CD4-positive, alpha-beta T cell (primary cell): ENCODE measurements at regions of chr19 and their contacts with region 1.

Region 1: GRCh38 chr19:16185123-16185767 is at the start of gene FAM32A:
- DNase-seq: peak; percentile 97 to 100 (median 98)
- ATAC-seq: peak; percentile 93
- H3K4me3 ChIP-seq: peak within 1 kb of the TSS; percentile 92
- H3K4me3 Mint-ChIP-seq: peak within 1 kb of the TSS; percentile 93
- H3K27ac ChIP-seq: peak within 1 kb of the TSS; percentile 83 to 85
- H3K27ac Mint-ChIP-seq: peak within 1 kb of the TSS; percentile 87
- H3K4me1 ChIP-seq: peaks cover 44% of the 10 kb centered on the region
- H3K4me1 Mint-ChIP-seq: peaks cover 29% of the 10 kb centered on the region
- H3K27me3 ChIP-seq: no peaks in the 10 kb centered on the region
- H3K27me3 Mint-ChIP-seq: no peaks in the 10 kb centered on the region
- CTCF ChIP-seq: no peak
- total RNA-seq, gene FAM32A: 44.5 to 50.3 TPM

Region 2: DNA sequence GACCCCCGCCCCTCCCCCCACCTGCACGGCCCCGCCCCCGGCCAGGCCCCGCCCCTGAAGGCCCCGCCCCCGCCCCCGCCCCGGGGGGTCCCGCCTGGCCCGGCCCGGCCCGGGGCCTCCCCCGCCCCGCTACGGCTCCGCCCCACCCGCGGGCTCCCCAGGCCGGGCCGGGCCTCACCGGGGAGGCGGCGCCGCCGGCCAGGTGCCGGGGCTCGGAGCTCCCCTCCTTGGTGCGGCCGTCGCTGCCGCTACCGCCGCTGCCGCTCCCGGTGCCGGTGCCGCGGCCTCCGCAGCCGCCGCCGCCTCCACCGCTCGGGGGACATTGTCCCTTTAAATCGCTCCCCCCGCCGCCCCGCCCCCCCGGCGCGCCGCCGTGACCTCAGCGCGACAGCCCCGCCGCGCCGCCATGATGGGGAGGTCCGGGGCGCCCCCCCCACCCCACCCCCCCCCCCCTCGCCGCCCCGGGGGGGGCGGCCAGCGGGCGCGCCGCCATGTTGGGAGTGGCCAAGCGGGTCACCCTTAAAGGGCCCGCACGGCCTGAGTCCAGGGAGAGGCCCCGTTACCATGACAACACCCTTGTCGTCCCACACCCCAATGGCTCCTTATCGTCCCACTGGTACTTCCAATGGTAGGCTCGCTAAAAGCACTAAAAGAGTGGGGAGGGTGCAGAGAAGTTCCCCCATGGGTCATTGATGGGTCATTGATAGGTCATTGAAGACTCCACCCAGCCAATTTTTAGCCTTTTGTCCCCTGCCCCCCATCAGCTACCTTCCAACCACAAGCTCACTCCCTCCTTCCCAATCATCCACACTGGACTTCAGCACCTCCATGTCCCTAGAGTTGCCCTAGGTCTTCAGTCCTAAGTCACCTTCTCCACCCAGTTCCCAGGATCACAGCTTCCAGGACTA is 735.4 kb before region 1 on chr19 and contains the start of gene WIZ:
- CTCF ChIA-PET with region 1: no interaction called
- POLR2A ChIA-PET with region 1: no interaction called
- intact Hi-C with region 1: loop called in 1 of 2 experiments (anchors 10 kb)
- DNase-seq: peak; percentile 75 to 92 (median 84)
- ATAC-seq: peak; percentile 83
- H3K4me3 ChIP-seq: peak within 1 kb of the TSS; percentile 47
- H3K4me3 Mint-ChIP-seq: peak within 1 kb of the TSS; percentile 92
- H3K27ac ChIP-seq: peak within 1 kb of the TSS in 1 of 2 donors; percentile 79
- H3K27ac Mint-ChIP-seq: peak within 1 kb of the TSS; percentile 81
- H3K4me1 ChIP-seq: peaks cover 30% of the 10 kb centered on the region
- H3K4me1 Mint-ChIP-seq: peaks cover 30% of the 10 kb centered on the region
- H3K27me3 ChIP-seq: no peaks in the 10 kb centered on the region
- H3K27me3 Mint-ChIP-seq: no peaks in the 10 kb centered on the region
- CTCF ChIP-seq: no peak
- total RNA-seq, gene WIZ: 12.9 to 14.3 TPM

Region 3: GRCh38 chr19:15532779-15533521 is 652.3 kb before region 1 on chr19:
- CTCF ChIA-PET with region 1: no interaction called
- POLR2A ChIA-PET with region 1: no interaction called
- intact Hi-C with region 1: no loop called
- DNase-seq: peak in 4 of 14 experiments; percentile 16 to 43 (median 32)
- ATAC-seq: peak; percentile 61
- H3K4me3 ChIP-seq: no peak overlapping the region
- H3K4me3 Mint-ChIP-seq: no peak overlapping the region
- H3K27ac ChIP-seq: no peak overlapping the region
- H3K27ac Mint-ChIP-seq: peak overlapping the region; percentile 43
- H3K4me1 ChIP-seq: peaks cover 11% of the 10 kb centered on the region
- H3K4me1 Mint-ChIP-seq: peaks cover 16% of the 10 kb centered on the region
- H3K27me3 ChIP-seq: no peaks in the 10 kb centered on the region
- H3K27me3 Mint-ChIP-seq: no peaks in the 10 kb centered on the region
- CTCF ChIP-seq: no peak

Region 4: DNA sequence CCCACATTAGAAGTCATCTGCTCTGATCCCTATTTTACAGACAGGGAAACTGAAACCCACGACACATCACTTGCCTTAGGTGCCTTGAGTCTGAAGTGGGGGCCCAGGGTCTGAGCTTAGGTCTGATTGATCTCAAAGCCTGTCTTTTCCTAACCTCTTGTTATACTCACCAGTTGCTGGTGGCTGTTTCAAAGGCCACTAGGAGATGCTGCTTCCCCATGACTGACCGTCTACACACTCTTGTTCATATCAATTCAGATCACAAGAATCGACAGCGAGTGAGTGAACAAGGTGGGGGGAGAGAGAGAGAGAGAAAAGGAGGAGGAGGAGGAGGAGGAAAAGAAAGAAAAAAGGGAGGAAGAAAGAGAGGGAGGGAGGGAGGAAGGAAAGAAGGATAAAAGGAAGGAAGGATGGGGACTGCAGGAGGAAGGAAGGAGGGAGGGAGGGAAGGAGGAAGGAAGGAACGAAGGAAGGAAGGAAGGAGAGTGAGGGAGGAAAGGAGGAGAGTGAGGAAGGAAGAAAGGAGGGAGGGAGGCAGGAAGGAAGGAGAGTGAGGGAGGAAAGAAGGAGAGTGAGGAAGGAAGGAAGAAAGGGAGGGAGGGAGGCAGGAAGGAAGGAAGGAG is 373.1 kb before region 1 on chr19:
- CTCF ChIA-PET with region 1: no interaction called
- POLR2A ChIA-PET with region 1: no interaction called
- intact Hi-C with region 1: loop called (anchors 1 to 2 kb)
- DNase-seq: peak; percentile 6 to 76 (median 40)
- ATAC-seq: peak; percentile 71
- H3K4me3 ChIP-seq: no peak overlapping the region
- H3K4me3 Mint-ChIP-seq: no peak overlapping the region
- H3K27ac ChIP-seq: no peak overlapping the region
- H3K27ac Mint-ChIP-seq: no peak overlapping the region
- H3K4me1 ChIP-seq: peaks cover 8% of the 10 kb centered on the region
- H3K4me1 Mint-ChIP-seq: peaks cover 10% of the 10 kb centered on the region
- H3K27me3 ChIP-seq: no peaks in the 10 kb centered on the region
- H3K27me3 Mint-ChIP-seq: peaks cover 17% of the 10 kb centered on the region
- CTCF ChIP-seq: peak; percentile 43

Region 5: GRCh38 chr19:16070366-16070990 is 114.8 kb before region 1 on chr19:
- CTCF ChIA-PET with region 1: no interaction called
- POLR2A ChIA-PET with region 1: interaction called, 17 read pairs
- intact Hi-C with region 1: loop called (anchors 1 to 10 kb)
- DNase-seq: peak; percentile 69 to 98 (median 86)
- ATAC-seq: peak; percentile 88
- H3K4me3 ChIP-seq: peak overlapping the region; percentile 31
- H3K4me3 Mint-ChIP-seq: peak overlapping the region; percentile 76
- H3K27ac ChIP-seq: peak overlapping the region; percentile 84 to 92
- H3K27ac Mint-ChIP-seq: no peak overlapping the region
- H3K4me1 ChIP-seq: peaks cover 77% of the 10 kb centered on the region
- H3K4me1 Mint-ChIP-seq: peaks cover 40% of the 10 kb centered on the region
- H3K27me3 ChIP-seq: no peaks in the 10 kb centered on the region
- H3K27me3 Mint-ChIP-seq: no peaks in the 10 kb centered on the region
- CTCF ChIP-seq: peak; percentile 37

Region 6: GRCh38 chr19:16143399-16144245 is 41.6 kb before region 1 on chr19 and contains the start of gene HSH2D:
- CTCF ChIA-PET with region 1: interaction called, 3 read pairs
- POLR2A ChIA-PET with region 1: interaction called, 18 read pairs
- intact Hi-C with region 1: no loop called
- DNase-seq: peak; percentile 73 to 90 (median 80)
- ATAC-seq: peak; percentile 100
- H3K4me3 ChIP-seq: peak within 1 kb of the TSS; percentile 77
- H3K4me3 Mint-ChIP-seq: peak within 1 kb of the TSS; percentile 97
- H3K27ac ChIP-seq: peak within 1 kb of the TSS; percentile 70 to 74
- H3K27ac Mint-ChIP-seq: peak within 1 kb of the TSS; percentile 96
- H3K4me1 ChIP-seq: peaks cover 60% of the 10 kb centered on the region
- H3K4me1 Mint-ChIP-seq: peaks cover 28% of the 10 kb centered on the region
- H3K27me3 ChIP-seq: no peaks in the 10 kb centered on the region
- H3K27me3 Mint-ChIP-seq: no peaks in the 10 kb centered on the region
- CTCF ChIP-seq: no peak
- total RNA-seq, gene HSH2D: 46.0 to 46.9 TPM

Region 7: DNA sequence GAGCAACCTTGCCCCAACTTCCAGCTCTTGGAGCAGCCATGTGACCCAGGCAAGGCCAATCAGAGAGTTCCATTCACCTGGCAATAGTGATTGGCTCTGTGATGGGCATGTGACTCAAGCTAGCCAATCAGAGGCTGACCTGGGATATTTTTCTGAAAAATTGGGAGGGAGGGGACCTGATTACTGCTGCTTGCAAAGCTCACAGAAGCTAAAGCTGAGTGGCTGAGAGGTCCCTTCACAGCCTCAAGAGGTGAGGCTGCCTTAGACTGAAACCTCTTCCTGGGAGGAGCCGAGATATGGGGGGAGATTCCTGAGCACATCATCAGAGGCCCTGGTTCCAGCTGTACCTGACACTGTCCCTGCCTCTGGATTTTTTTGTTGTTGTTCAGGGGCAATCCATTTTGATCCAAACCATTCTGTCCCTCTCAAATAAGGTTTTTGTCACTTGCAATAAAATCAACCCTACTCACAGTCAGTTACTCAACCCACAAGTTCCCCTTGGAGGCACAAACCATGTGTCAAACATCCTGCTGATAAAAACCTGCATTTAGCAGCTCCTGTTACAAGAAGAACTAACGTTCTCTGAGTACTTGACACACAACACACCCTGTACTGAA is 16.7 kb before region 1 on chr19:
- CTCF ChIA-PET with region 1: no interaction called
- POLR2A ChIA-PET with region 1: no interaction called
- intact Hi-C with region 1: no loop called
- DNase-seq: peak in 1 of 14 experiments; percentile 39
- ATAC-seq: no peak
- H3K4me3 ChIP-seq: no peak overlapping the region
- H3K4me3 Mint-ChIP-seq: no peak overlapping the region
- H3K27ac ChIP-seq: no peak overlapping the region
- H3K27ac Mint-ChIP-seq: no peak overlapping the region
- H3K4me1 ChIP-seq: peaks cover 5% of the 10 kb centered on the region
- H3K4me1 Mint-ChIP-seq: no peaks in the 10 kb centered on the region
- H3K27me3 ChIP-seq: no peaks in the 10 kb centered on the region
- H3K27me3 Mint-ChIP-seq: no peaks in the 10 kb centered on the region
- CTCF ChIP-seq: no peak

Region 8: GRCh38 chr19:16330368-16330801 is 145.1 kb after region 1 on chr19:
- CTCF ChIA-PET with region 1: no interaction called
- POLR2A ChIA-PET with region 1: interaction called, 16 read pairs
- intact Hi-C with region 1: no loop called
- DNase-seq: peak; percentile 87 to 98 (median 94)
- ATAC-seq: peak; percentile 66
- H3K4me3 ChIP-seq: peak overlapping the region; percentile 98
- H3K4me3 Mint-ChIP-seq: peak overlapping the region; percentile 92
- H3K27ac ChIP-seq: peak overlapping the region; percentile 77 to 94
- H3K27ac Mint-ChIP-seq: peak overlapping the region; percentile 97
- H3K4me1 ChIP-seq: peaks cover 49% of the 10 kb centered on the region
- H3K4me1 Mint-ChIP-seq: peaks cover 59% of the 10 kb centered on the region
- H3K27me3 ChIP-seq: no peaks in the 10 kb centered on the region
- H3K27me3 Mint-ChIP-seq: peaks cover 24% of the 10 kb centered on the region
- CTCF ChIP-seq: no peak

Region 9: DNA sequence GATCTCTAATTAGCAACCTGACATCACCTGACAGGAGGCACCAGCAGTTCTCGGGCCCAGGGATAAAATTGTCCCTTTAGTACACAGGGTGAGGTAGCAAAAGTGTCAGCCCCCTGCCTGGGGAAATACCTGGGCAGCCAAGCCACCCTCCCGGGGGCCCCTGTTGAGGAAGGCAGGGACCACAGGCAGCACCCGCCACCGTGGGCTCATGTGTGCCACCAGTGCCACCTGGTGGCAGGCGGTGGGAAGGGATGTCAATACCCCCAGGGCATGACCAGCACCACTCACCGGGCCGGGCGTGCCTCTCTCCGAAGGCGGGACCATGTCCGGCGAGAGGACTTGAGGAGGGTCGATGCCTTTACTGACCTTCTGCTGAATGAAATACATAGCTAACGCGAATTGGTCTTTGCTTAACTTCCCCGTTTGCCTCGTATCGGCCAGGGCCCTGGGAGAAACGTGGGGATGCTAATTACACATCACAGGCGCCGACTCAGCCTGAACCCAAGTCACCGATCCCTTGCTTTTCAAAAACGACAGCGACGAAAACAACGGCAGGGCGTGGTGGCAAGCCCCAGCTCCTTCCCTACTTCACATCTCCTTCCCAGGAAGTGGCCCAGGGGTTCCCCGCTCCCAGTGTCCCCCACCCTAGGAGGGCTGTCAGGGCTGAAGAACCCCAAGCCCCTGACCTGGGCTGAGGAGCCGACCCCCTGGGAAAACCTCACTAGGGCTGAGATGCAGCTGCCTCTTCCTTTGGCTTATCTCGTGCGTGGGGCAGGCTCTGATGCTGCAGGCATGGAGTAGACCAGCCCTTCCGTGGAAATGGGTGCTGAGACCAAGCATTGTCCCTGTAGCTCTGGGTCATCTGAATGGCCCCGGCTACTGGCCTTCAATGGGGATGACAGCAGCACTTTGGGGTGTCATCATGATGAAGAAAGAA is 232.7 kb after region 1 on chr19:
- CTCF ChIA-PET with region 1: no interaction called
- POLR2A ChIA-PET with region 1: no interaction called
- intact Hi-C with region 1: loop called in 1 of 2 experiments (anchors 2 kb)
- DNase-seq: peak; percentile 57 to 86 (median 67)
- ATAC-seq: peak; percentile 96
- H3K4me3 ChIP-seq: no peak overlapping the region
- H3K4me3 Mint-ChIP-seq: no peak overlapping the region
- H3K27ac ChIP-seq: no peak overlapping the region
- H3K27ac Mint-ChIP-seq: peak overlapping the region; percentile 33
- H3K4me1 ChIP-seq: peaks cover 10% of the 10 kb centered on the region
- H3K4me1 Mint-ChIP-seq: peaks cover 12% of the 10 kb centered on the region
- H3K27me3 ChIP-seq: no peaks in the 10 kb centered on the region
- H3K27me3 Mint-ChIP-seq: no peaks in the 10 kb centered on the region
- CTCF ChIP-seq: peak; percentile 89